ENCODE measurements at regions of chrX and their contacts with region 1.

Region 1: DNA sequence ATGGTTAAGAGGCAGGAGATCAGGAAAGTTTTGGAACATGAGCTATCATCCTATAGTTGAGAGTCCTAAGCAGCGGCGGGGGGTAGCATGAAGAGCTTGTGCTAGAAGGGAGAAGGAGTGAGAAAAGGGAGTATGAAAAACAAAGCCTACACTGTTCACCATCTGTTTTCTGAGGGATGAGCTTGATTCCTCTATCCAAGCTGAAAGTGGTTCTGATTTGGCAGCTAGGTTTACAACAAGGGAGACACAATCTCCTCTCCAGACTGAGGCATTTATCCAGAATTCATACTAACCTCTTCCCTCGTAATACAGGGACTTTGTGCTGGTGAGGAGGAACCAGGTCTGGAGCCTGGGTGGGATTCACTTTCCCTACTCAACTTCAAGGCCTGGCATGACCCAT is 23.5 kb downstream of the TSC22D3 start:
- DNase-seq: peak in 1 of 10 donors; percentile 18
- H3K4me3 ChIP-seq: no peak overlapping the region
- H3K27ac ChIP-seq: peak overlapping the region in 57 of 59 donors; percentile 13 to 97 (median 65)
- H3K27me3 ChIP-seq: peaks cover 0 to 71% (median 7%) of the 10 kb centered on the region in 45 donors
- CTCF ChIP-seq: no peak

Region 2: DNA sequence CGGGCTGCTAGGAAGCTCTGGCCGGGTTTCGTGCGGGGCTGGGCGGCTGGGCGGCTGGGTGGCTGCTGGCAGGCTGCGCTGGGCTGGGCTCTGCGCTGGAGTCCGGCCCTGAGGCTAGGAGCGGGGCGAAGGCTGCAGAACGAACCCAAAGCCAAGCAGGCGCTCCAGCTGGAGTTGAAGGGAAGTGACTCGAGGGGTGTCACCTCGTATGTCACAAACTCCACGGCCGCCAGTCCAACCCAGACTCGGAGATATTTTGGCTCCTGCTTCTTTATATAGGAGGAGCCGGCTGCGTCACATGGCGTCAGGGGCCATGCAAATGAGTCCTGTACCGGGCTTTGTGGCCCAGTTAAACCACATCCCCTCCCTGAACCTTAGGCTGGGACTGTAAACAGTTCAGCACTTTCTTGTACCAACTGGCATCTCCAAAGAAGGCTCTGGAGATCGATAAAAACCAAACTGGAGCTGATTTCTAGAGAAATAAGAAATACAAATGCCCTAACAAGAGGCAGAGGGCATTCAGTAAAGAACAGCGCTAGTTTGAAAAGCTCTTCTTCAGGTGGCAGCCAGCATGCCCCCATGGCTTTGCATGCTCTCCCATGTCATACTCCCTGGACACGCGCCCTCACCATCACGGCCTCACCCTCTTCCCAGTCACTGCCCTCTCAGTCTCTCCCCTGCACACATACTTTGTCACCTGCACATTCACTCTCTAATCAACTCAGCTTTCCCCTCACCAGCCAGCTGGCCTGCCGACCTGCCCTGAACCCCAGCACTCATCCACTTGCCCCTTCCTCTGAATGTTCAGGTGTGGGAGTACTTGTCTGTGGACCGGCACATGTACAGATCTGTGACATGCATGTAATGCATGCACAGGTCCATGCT is 35.0 kb before region 1 on chrX:
- intact Hi-C with region 1: loop called in 1 of 2 experiments (anchors 1 kb)
- DNase-seq: peak; percentile 57 to 86 (median 83)
- H3K4me3 ChIP-seq: peak overlapping the region; percentile 52 to 80 (median 69)
- H3K27ac ChIP-seq: peak overlapping the region; percentile 76 to 98 (median 91)
- H3K27me3 ChIP-seq: peaks cover 0 to 91% (median 38%) of the 10 kb centered on the region in 45 donors
- CTCF ChIP-seq: peak in 1 of 56 donors; percentile 15

Measured in dorsolateral prefrontal cortex (tissue), 120 donors.